Activated T-helper 2 cell treated with anti-CD3 and anti-CD28 coated beads, Interferon-gamma antibody, Interleukin-2, Interleukin-4, amounts not matched to agents 10 μg/mL and 5 μg/mL and 100 μg/mL, durations not matched to agents 14 hours and 24 hours and 36 hours (primary cell): ENCODE measurements at regions of chr11 and their contacts with region 1.

Region 1: GRCh38 chr11:113289431-113290187 is 24.8 kb upstream of the TTC12 start:
- DNase-seq: peak; percentile 54
- H3K4me3 Mint-ChIP-seq: no peak overlapping the region
- H3K27ac Mint-ChIP-seq: no peak overlapping the region
- H3K4me1 Mint-ChIP-seq: no peaks in the 10 kb centered on the region
- H3K27me3 Mint-ChIP-seq: no peaks in the 10 kb centered on the region

Region 2: GRCh38 chr11:112289588-112290492 is 999.8 kb before region 1 on chr11:
- intact Hi-C with region 1: loop called (anchors 5 kb)
- DNase-seq: peak; percentile 83
- H3K4me3 Mint-ChIP-seq: peak overlapping the region; percentile 70
- H3K27ac Mint-ChIP-seq: no peak overlapping the region
- H3K4me1 Mint-ChIP-seq: peaks cover 20% of the 10 kb centered on the region
- H3K27me3 Mint-ChIP-seq: peaks cover 19% of the 10 kb centered on the region

Region 3: DNA sequence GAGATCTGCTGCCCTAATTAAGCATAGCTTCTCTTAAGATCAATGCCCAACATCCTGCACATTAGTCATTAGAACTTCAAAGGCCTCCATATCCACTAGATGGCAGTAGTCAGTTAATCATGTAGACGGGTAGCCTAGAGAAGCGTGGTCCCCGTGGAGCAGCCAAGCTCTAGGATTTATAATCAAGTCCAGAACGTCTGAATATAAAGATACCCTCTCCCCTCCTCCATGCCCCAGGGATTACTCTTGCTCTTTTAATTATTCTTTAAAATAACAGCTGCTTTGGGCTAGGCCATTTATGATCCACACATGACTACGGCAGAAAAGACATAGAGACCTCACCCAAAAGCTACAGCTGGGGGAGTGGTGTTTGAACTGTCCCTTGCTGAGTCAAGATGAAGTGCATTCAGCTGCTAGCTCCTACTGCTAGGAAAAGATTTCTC is 701.3 kb before region 1 on chr11:
- intact Hi-C with region 1: loop called (anchors 1 kb)
- DNase-seq: peak; percentile 11
- H3K4me3 Mint-ChIP-seq: no peak overlapping the region
- H3K27ac Mint-ChIP-seq: no peak overlapping the region
- H3K4me1 Mint-ChIP-seq: no peaks in the 10 kb centered on the region
- H3K27me3 Mint-ChIP-seq: peaks cover 6% of the 10 kb centered on the region

Region 4: DNA sequence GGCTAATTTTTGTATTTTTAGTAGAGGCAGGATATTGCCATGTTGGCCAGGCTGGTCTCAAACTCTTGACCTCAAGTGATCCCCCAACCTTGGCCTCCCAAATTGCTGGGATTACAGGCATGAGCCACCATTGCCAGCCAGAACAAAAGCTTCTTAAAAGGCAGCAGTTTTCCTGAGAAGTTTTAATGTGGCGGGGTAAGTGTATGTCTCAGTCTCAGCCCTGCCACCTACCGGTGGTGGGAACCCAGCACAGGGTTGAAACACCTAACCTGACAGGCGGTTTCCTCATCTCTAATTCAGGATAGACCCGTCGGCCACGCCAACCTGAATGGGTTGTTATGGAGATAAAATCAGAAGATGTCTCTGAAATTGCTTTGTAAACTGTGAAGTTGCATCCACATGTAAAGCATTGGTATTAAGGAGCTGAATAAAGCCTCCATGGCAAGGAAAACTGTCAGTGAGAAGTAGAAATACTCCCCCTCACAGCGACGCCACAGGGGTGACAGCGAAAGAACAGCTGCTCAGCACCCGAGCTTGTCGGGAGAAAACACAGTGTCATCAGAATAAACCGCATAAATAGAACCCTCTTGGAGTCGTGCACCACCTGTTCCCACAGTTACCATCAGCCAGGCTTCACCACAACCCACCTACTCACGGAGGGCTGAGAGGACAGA is 494.3 kb before region 1 on chr11:
- intact Hi-C with region 1: loop called (anchors 2 kb)
- DNase-seq: no peak
- H3K4me3 Mint-ChIP-seq: no peak overlapping the region
- H3K27ac Mint-ChIP-seq: no peak overlapping the region
- H3K4me1 Mint-ChIP-seq: peaks cover 1% of the 10 kb centered on the region
- H3K27me3 Mint-ChIP-seq: no peaks in the 10 kb centered on the region

Region 5: DNA sequence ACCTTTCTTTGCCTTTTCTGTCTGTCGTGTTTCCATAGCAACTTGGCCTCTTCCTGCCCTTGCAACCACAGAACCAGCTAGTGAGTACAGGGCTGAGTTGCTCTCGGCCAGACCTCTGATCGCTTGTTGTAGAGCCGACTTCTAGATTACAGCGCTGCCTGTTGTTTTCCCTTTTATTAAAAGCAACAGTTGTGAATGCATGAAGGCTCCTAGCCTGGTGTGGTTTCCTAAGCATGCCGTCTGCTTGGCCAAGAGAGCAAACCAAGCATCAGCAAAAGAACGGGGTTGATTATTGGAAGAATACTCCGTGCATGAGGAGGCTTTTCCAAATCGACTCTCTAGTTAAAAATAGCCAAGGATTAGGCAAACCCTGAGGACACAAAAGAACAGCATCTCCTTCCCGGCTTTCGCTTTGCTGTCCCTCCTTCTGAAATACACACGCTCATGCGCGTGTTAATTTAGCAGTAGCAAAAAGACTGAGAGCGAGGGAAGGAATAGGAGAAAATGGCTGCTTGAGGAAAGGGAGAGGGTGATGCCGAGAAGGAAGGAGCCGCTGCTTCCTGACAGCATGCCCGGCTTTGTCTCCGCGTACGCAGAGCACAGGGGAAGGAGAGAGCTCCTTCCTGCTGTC is 46.7 kb before region 1 on chr11:
- intact Hi-C with region 1: no loop called
- DNase-seq: peak; percentile 46
- H3K4me3 Mint-ChIP-seq: peak overlapping the region; percentile 31
- H3K27ac Mint-ChIP-seq: no peak overlapping the region
- H3K4me1 Mint-ChIP-seq: peaks cover 17% of the 10 kb centered on the region
- H3K27me3 Mint-ChIP-seq: peaks cover 36% of the 10 kb centered on the region

Region 6: DNA sequence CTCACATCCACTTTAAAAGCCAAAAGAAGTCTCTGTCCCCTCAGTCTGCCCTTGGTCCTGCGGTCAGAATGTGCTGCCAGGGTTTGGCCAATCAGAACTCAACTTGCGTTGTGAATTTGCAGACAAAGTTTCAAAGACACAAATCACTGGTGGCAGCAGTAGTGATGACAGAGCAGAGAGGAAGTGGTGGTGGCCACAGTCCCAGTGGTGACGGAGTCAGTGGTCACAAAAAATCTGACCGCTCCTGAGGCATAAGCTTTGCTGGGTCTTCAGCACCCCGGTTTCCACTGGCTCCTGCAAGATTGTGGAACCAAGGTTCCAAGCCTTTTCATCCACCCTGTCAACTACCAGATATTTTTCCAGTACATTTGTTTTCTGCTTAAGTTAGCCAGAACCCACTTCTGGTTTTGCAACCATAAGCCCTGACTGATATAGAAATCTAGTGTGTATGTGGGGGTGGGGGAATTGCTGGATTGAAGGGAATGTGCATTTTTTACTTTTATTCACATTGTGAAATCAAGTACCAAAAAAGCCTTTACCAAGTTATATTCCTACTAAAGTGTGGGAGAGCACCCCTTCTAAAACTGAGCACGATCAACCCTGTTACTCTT is 304.2 kb after region 1 on chr11:
- intact Hi-C with region 1: no loop called
- DNase-seq: peak; percentile 36
- H3K4me3 Mint-ChIP-seq: no peak overlapping the region
- H3K27ac Mint-ChIP-seq: peak overlapping the region; percentile 63
- H3K4me1 Mint-ChIP-seq: peaks cover 36% of the 10 kb centered on the region
- H3K27me3 Mint-ChIP-seq: peaks cover 26% of the 10 kb centered on the region